ENCODE measurements at regions of chr4 and their contacts with region 1.

Region 1: GRCh38 chr4:127604949-127605709 is 27.6 kb upstream of the INTU start:
- DNase-seq: no peak
- ATAC-seq: no peak
- H3K4me3 ChIP-seq: no peak overlapping the region
- H3K27ac ChIP-seq: no peak overlapping the region
- H3K4me1 ChIP-seq: no peaks in the 10 kb centered on the region
- H3K27me3 ChIP-seq: no peaks in the 10 kb centered on the region
- CTCF ChIP-seq: peak; percentile 66

Region 2: DNA sequence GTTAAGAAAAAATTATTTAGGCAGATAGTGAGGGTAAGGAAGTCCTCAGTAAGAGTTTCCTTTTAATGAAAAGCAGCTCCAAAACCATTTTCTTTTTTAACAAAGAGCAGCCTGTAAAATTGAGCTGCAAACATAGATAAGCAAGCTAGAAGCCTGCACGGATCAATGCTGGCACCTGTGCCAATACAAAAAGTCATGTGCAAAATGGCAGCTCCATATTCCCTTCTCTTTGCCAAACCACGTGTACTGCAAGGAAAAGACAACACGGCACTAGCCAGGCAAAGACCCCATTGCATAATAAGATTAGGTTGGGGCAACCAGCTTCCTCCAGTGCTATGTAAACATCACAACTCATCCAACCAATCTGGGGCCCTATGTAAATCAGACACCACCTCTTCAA is 240.7 kb before region 1 on chr4:
- intact Hi-C with region 1: no loop called
- DNase-seq: no peak
- ATAC-seq: no peak
- H3K4me3 ChIP-seq: no peak overlapping the region
- H3K27ac ChIP-seq: no peak overlapping the region
- H3K4me1 ChIP-seq: no peaks in the 10 kb centered on the region
- H3K27me3 ChIP-seq: no peaks in the 10 kb centered on the region
- CTCF ChIP-seq: no peak

Region 3: GRCh38 chr4:127394516-127394915 is 210.6 kb before region 1 on chr4:
- intact Hi-C with region 1: no loop called
- DNase-seq: no peak
- ATAC-seq: no peak
- H3K4me3 ChIP-seq: no peak overlapping the region
- H3K27ac ChIP-seq: no peak overlapping the region
- H3K4me1 ChIP-seq: no peaks in the 10 kb centered on the region
- H3K27me3 ChIP-seq: no peaks in the 10 kb centered on the region
- CTCF ChIP-seq: no peak

Region 4: GRCh38 chr4:127463883-127464282 is 141.2 kb before region 1 on chr4:
- intact Hi-C with region 1: no loop called
- DNase-seq: no peak
- ATAC-seq: no peak
- H3K4me3 ChIP-seq: no peak overlapping the region
- H3K27ac ChIP-seq: no peak overlapping the region
- H3K4me1 ChIP-seq: no peaks in the 10 kb centered on the region
- H3K27me3 ChIP-seq: no peaks in the 10 kb centered on the region
- CTCF ChIP-seq: no peak

Region 5: DNA sequence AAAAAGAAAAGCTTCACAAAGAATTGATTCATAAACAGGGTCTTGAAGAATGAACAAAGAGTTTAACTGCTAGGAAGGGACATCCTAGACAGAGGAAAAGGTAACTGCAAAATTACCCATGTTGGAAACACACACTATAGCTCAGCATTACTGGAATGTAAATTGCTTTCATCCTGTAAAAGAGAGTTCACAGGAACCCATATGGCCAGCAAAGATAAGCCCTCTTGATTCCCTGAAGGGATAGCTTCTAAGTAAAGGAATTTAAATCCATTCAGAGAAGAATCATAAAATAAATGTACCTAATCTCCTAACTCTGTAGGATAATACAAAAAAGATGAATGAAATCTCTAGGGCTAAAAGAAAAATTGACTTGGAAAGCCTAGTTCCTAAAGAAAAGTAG is 79.5 kb before region 1 on chr4:
- intact Hi-C with region 1: no loop called
- DNase-seq: no peak
- ATAC-seq: no peak
- H3K4me3 ChIP-seq: no peak overlapping the region
- H3K27ac ChIP-seq: no peak overlapping the region
- H3K4me1 ChIP-seq: no peaks in the 10 kb centered on the region
- H3K27me3 ChIP-seq: no peaks in the 10 kb centered on the region
- CTCF ChIP-seq: no peak

Region 6: DNA sequence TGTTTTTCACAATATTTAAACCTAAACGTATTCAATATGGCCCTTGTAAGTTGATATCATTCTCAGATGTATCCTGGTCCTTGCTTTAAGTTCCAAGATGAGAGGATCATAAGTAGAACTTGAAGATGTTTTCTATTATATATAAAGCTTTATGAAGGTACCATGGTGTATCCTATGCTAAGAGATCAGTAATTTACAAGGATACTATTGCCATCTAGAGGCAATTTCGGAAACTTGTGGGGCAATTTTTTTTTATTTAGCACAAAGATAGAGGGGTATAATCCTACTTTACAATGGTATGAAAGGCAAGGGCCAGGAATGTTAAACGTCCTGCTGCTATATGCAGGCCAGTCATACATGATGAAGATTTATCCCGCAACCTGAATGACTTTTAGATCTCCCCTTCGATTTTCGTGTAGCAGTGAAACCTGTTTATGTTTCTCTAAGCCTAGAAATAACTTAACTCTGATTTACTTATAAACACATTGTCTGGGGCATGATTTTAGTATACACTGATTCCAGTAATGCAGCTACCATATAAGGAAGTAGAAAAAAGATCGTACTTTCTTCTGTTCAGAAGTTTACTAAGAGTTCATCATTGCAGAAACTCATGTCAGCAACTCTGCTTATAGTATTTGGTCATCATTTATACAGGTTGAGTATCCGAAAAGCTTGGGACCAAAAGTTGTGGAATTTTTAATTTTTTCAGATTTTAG is 127.6 kb after region 1 on chr4:
- intact Hi-C with region 1: loop called (anchors 5 kb)
- DNase-seq: no peak
- ATAC-seq: peak; percentile 51
- H3K4me3 ChIP-seq: no peak overlapping the region
- H3K27ac ChIP-seq: no peak overlapping the region
- H3K4me1 ChIP-seq: no peaks in the 10 kb centered on the region
- H3K27me3 ChIP-seq: no peaks in the 10 kb centered on the region
- CTCF ChIP-seq: peak; percentile 64

Measured in upper lobe of right lung (tissue), 1 donor.